Heart left ventricle (tissue), 16 donors: ENCODE measurements at regions of chr12 and their contacts with region 1.

Region 1: DNA sequence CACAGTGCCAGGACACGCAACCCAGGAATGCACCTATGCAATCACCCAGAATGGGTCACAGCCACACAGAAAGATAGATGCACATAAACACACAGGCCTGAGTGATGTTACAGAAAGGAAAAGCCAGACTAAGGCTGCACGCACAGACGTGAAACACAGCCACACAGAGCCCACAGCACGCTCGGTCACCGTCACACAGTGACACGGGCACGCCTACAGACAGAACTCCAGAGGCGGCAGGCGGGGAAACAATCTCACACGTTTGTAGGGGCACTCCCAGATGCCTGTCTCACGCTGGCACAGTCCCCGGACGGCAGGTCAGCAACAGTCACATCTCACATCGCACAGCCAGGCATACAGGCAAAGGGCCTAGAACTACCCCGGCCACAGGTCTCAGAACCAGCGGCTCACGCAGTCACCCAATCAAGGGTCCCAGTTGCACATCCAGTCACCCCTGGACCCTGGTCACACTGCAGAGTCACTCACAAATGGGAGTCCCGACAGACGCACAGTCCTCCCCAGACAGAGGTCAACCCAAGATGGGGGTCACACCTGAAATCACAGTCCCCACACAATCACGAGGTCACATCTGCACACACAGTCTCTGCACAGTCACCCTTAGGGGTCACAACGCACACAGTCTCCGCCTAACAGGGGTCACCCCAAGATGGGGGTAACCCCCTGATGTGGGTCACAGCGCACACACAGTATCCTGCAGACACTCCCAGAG is 790 bp downstream of the SSH1 start:
- DNase-seq: peak; percentile 80 to 93 (median 86)
- ATAC-seq: peak; percentile 41 to 63 (median 60)
- H3K4me3 ChIP-seq: peak overlapping the region; percentile 62 to 98 (median 88)
- H3K27ac ChIP-seq: peak overlapping the region; percentile 86 to 99 (median 96)
- H3K4me1 ChIP-seq: peaks cover 12 to 82% (median 57%) of the 10 kb centered on the region in 12 donors
- H3K27me3 ChIP-seq: no peaks in the 10 kb centered on the region
- CTCF ChIP-seq: no peak
- POLR2A ChIP-seq: peak in 1 of 2 donors; percentile 44

Region 2: GRCh38 chr12:108664338-108665258 is 192.0 kb before region 1 on chr12:
- intact Hi-C with region 1: loop called in 5 of 10 experiments (anchors 5 kb)
- DNase-seq: peak; percentile 76 to 87 (median 84)
- ATAC-seq: peak; percentile 85 to 93 (median 92)
- H3K4me3 ChIP-seq: peak overlapping the region in 1 of 12 donors; percentile 12
- H3K27ac ChIP-seq: peak overlapping the region; percentile 62 to 88 (median 80)
- H3K4me1 ChIP-seq: peaks cover 17 to 60% (median 50%) of the 10 kb centered on the region in 12 donors
- H3K27me3 ChIP-seq: no peaks in the 10 kb centered on the region
- CTCF ChIP-seq: peak; percentile 88 to 98 (median 96)
- POLR2A ChIP-seq: peak in 1 of 2 donors; percentile 28

Region 3: DNA sequence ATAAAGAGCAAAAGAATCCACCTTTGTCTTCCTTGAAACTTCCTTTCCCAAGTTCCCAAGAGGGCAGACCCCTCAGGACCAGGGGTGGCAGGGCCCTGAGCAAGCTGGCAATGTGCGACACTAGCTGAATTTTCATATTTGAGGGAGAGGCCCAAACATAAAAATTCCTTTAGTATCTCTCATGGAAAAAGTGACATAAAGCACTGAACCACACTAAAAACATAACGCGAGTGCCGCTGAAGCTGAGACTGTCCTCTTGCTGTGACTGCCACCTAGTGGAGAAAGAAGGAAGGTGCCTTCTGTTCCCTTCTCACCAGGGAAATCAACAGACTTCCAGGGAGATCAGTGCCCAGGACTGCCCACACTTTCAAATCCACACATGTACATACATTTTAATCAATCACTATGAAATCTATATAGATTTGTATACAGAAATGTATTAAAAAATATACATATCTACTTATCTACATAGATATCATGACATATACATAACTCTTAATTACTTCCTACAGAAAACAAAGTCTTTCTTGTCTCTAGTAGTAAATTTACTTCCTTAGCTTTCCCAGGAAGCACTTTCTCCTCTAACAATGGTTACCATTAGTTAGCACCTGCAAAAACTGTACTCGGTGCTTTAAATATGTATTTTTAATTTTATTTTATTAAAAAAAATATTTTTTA is 53.0 kb before region 1 on chr12:
- intact Hi-C with region 1: loop called in 8 of 10 experiments (anchors 2 to 10 kb)
- DNase-seq: peak in 4 of 5 donors; percentile 78 to 82 (median 81)
- ATAC-seq: peak; percentile 69 to 79 (median 72)
- H3K4me3 ChIP-seq: peak overlapping the region in 4 of 12 donors; percentile 39 to 48 (median 40)
- H3K27ac ChIP-seq: peak overlapping the region; percentile 65 to 96 (median 88)
- H3K4me1 ChIP-seq: peaks cover 10 to 88% (median 59%) of the 10 kb centered on the region in 12 donors
- H3K27me3 ChIP-seq: no peaks in the 10 kb centered on the region
- CTCF ChIP-seq: peak; percentile 87 to 99 (median 97)
- POLR2A ChIP-seq: no peak

Region 4: DNA sequence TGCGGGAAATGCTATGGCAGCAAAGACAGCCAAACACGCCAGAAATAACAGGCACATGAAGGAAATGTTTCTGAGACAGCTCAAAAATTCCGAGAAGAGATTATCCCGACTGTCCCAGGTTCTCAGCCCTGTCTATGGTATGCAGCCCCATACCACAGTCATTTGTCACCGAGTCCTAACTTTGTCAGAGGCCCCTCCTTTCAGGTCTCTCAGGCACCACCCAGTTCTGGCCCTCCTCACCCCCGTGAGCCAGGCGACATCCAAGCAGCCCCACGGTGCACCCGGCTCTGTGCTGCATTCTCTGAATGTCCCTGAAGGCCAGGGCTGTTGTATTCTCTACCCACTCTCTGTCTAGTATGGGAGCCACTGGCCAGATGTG is 23.2 kb before region 1 on chr12:
- intact Hi-C with region 1: loop called in 2 of 10 experiments (anchors 2 kb)
- DNase-seq: peak in 3 of 5 donors; percentile 66 to 81 (median 78)
- ATAC-seq: peak; percentile 25 to 72 (median 38)
- H3K4me3 ChIP-seq: peak overlapping the region in 5 of 12 donors; percentile 4 to 32 (median 12)
- H3K27ac ChIP-seq: peak overlapping the region; percentile 83 to 96 (median 92)
- H3K4me1 ChIP-seq: peaks cover 30 to 91% (median 80%) of the 10 kb centered on the region in 12 donors
- H3K27me3 ChIP-seq: no peaks in the 10 kb centered on the region
- CTCF ChIP-seq: no peak
- POLR2A ChIP-seq: peak in 1 of 2 donors; percentile 27